ENCODE measurements at regions of chrX and their contacts with region 1.

Region 1: GRCh38 chrX:129931411-129932015 is 25.5 kb downstream of the UTP14A start:
- DNase-seq: peak; percentile 80 to 96 (median 91)

Region 2: GRCh38 chrX:129823115-129823514 is 108.4 kb before region 1 on chrX:
- intact Hi-C with region 1: no loop called
- DNase-seq: peak in 21 of 42 donors; percentile 17 to 65 (median 38)

Region 3: GRCh38 chrX:129982274-129983251 is 51.0 kb after region 1 on chrX and contains the start of gene BCORL1:
- intact Hi-C with region 1: loop called (anchors 5 kb)
- DNase-seq: peak; percentile 78 to 97 (median 92)

Region 4: DNA sequence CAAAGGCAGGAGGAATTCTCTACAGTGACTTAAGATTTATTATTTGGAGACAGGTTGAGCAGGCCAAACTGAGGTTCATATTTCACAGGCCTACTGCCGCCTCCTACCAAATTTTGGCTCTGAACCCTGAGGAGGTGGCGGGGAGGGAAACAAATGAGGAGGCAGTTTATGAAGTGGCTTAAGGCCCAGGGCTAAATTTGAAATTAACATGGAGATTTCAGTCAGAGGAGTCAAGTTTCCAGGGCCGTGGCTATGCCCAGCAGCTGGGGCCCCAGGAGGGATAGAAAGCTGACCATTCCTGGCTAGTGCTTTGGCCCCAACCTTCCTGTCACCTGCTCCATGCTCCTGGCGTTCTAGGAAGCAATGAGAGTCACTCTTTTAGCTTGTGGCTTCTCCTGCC is 1053.3 kb after region 1 on chrX:
- intact Hi-C with region 1: no loop called
- DNase-seq: no peak

Measured in head of caudate nucleus (tissue), 42 donors.